Heart left ventricle (tissue), 16 donors: ENCODE measurements at regions of chrX and their contacts with region 1.

Region 1: DNA sequence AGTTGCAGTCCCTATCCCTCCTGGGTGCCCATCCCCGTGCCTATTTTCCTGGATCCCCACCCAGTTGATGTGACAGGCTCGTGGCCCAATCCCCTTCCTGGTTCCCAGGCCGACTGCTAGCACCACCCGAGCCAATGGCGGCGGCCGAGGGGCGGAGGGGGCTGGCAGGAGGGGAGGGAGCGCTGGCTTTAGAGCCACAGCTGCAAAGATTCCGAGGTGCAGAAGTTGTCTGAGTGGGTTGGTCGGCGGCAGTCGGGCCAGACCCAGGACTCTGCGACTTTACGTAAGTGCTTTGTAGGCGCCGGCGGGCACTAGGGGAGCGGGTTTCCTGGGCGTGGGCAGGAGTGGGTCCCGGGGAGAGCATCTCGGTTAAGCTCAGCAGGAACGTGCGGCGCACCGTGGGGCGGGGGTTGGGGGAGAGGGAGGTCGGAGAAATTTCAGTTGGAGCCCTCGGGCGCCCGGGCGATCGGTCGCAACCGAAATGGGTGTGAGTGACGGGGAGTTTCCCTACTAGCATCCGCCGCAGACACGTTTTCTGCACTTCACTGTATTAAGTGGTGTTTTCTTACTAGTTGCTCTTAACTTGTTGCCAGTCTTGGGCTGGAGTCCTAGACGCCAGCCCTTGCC is at the start of gene PLS3:
- DNase-seq: peak; percentile 88 to 92 (median 90)
- ATAC-seq: peak; percentile 91 to 94 (median 93)
- H3K4me3 ChIP-seq: peak within 1 kb of the TSS; percentile 56 to 86 (median 72)
- H3K27ac ChIP-seq: peak within 1 kb of the TSS; percentile 79 to 96 (median 91)
- H3K4me1 ChIP-seq: peaks cover 0 to 39% (median 6%) of the 10 kb centered on the region in 12 donors
- H3K27me3 ChIP-seq: peaks cover 0 to 59% (median 0%) of the 10 kb centered on the region in 9 donors
- CTCF ChIP-seq: no peak
- POLR2A ChIP-seq: peak in 1 of 2 donors; percentile 86
- total RNA-seq, gene PLS3: 33.6 to 61.8 (median 36.6) TPM

Region 2: DNA sequence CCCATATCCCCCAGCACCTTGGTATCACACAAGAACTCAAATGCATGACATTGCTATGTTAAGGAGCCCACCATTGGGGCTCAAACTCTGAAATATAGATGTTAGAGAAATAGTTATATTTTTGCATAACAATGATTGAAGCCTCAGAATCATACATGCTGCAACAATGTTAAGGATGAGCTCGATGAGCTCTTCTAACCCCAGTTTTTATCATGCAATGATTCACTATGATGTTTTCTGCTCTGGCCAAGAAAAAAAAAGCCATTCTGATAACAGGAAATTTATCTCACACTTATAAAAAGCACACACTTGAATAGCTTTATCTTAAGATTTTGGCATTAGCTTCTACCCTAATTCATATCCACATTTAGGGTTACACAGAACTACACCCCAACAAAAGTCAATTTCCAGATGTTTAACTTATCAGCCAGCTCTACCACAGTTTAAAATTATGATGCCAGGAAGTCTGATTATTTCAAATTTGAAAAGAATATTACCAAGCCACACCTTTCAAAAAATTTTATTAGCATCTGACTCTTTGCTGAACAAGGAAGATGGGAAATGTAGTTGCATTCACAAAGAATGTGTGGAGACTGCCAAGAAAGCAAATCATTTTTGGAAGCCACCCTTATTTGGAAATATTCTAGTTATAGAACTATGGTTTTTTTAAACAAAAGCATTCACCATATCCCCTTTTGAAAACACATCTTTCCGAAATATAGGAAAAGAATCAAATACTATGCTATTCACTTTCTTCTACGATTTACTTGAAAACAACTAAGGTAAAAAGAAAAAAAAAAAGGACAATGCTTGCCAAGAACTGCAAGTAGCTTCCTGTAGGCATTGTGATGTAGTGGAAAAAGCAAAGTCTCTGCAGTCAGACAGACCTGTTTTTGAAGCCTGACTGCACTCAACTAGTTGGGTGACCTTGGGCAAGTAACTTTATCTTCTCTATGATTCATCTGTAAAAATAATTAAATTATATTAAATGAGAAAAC is 100.9 kb before region 1 on chrX:
- intact Hi-C with region 1: loop called in 2 of 10 experiments (anchors 5 to 10 kb)
- DNase-seq: no peak
- ATAC-seq: peak in 3 of 4 donors; percentile 57 to 87 (median 71)
- H3K4me3 ChIP-seq: no peak overlapping the region
- H3K27ac ChIP-seq: peak overlapping the region in 9 of 12 donors; percentile 4 to 65 (median 35)
- H3K4me1 ChIP-seq: peaks cover 0 to 31% (median 6%) of the 10 kb centered on the region in 12 donors
- H3K27me3 ChIP-seq: peaks cover 0 to 4% (median 0%) of the 10 kb centered on the region in 9 donors
- CTCF ChIP-seq: no peak
- POLR2A ChIP-seq: no peak

Region 3: DNA sequence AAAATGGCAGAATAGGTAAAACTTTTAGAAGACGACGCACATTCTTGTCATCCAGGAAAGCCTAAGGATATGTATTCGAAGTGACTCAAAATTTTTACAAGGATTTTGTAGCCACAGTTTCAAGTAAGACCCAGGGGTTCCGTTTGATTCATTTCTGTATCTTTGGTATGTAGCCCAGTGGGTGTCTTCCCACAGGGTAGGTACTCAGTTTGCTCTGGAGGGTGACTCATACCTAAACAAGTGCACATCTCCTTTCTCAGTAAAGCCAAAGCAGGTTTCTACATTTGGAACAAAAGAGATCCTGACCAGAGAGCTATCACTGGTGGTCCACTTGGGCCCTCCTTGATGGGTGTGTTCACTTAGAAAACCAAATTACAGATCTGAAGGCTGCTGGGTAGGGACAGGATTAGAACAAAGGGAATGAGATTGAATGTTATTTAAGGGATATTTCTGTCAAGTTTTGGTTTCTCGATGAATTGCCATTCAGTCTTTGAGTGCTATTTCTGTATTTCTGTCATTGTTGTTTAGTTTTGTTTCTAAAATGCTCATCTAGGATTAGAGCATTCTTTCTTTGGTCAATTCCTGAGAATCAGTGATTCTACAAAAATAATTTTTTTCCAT is 56.0 kb after region 1 on chrX:
- intact Hi-C with region 1: loop called in 4 of 10 experiments (anchors 5 to 10 kb)
- DNase-seq: no peak
- ATAC-seq: peak in 3 of 4 donors; percentile 41 to 59 (median 49)
- H3K4me3 ChIP-seq: peak overlapping the region in 2 of 12 donors; percentile 19 to 37
- H3K27ac ChIP-seq: peak overlapping the region in 11 of 12 donors; percentile 4 to 91 (median 76)
- H3K4me1 ChIP-seq: peaks cover 0 to 73% (median 11%) of the 10 kb centered on the region in 12 donors
- H3K27me3 ChIP-seq: peaks cover 0 to 59% (median 0%) of the 10 kb centered on the region in 9 donors
- CTCF ChIP-seq: no peak
- POLR2A ChIP-seq: no peak

Region 4: GRCh38 chrX:115625572-115626301 is 64.6 kb after region 1 on chrX:
- intact Hi-C with region 1: loop called in 5 of 10 experiments (anchors 5 to 10 kb)
- DNase-seq: no peak
- ATAC-seq: peak in 2 of 4 donors; percentile 44 to 46
- H3K4me3 ChIP-seq: peak overlapping the region in 1 of 12 donors; percentile 7
- H3K27ac ChIP-seq: peak overlapping the region in 11 of 12 donors; percentile 23 to 73 (median 43)
- H3K4me1 ChIP-seq: peaks cover 0 to 56% (median 8%) of the 10 kb centered on the region in 12 donors
- H3K27me3 ChIP-seq: peaks cover 0 to 38% (median 0%) of the 10 kb centered on the region in 9 donors
- CTCF ChIP-seq: no peak
- POLR2A ChIP-seq: no peak

Region 5: DNA sequence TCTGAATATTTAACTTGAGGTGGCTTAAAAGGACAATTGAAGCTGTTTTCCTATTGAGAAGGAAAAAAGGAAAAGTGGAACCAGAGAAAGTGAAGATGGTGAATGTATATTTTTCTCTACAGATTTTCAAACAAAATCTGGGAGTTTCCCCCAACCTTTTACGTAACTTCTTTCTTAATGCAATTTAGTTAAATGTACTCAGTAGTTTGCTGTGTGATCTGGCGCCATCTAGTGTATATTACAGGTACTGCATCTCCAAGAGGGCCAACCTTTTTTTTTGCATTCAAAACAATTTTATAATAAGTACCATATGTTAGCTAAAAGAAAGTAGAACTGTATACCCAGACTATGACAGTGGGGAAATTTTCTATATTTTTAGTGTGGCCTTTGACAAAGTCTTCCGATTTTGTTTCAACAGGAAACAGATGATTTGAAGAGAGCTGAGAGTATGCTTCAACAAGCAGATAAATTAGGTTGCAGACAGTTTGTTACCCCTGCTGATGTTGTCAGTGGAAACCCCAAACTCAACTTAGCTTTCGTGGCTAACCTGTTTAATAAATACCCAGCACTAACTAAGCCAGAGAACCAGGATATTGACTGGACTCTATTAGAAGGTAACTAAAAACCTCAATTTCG is 81.9 kb after region 1 on chrX:
- intact Hi-C with region 1: loop called in 3 of 10 experiments (anchors 5 kb)
- DNase-seq: peak in 1 of 5 donors; percentile 15
- ATAC-seq: no peak
- H3K4me3 ChIP-seq: no peak overlapping the region
- H3K27ac ChIP-seq: peak overlapping the region in 9 of 12 donors; percentile 2 to 59 (median 46)
- H3K4me1 ChIP-seq: peaks cover 0 to 12% (median 2%) of the 10 kb centered on the region in 12 donors
- H3K27me3 ChIP-seq: peaks cover 0 to 18% (median 0%) of the 10 kb centered on the region in 9 donors
- CTCF ChIP-seq: peak; percentile 80 to 99 (median 88)
- POLR2A ChIP-seq: no peak

Region 6: DNA sequence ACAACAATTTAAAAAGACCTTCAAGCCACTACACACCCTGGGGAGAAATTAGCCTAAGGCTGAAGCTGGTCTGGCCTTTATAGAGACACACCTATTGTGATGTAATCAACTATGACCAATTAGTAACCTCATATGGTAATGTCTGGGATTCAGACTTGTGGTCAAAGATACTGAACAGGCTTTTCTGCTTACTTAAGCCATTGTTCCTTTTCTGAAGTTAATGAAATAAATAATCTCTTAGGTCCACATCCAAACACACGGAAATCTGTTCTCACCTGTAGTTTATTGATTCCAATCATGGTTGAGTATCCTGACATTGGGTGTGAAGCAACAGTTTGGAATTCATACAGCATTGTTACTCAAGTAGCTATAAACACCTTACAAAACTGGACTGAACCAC is 152.4 kb after region 1 on chrX:
- intact Hi-C with region 1: no loop called
- DNase-seq: no peak
- ATAC-seq: no peak
- H3K4me3 ChIP-seq: no peak overlapping the region
- H3K27ac ChIP-seq: no peak overlapping the region
- H3K4me1 ChIP-seq: no peaks in the 10 kb centered on the region
- H3K27me3 ChIP-seq: peaks cover 0 to 45% (median 0%) of the 10 kb centered on the region in 9 donors
- CTCF ChIP-seq: no peak
- POLR2A ChIP-seq: no peak